ENCODE measurements at regions of chr9 and their contacts with region 1.

Region 1: DNA sequence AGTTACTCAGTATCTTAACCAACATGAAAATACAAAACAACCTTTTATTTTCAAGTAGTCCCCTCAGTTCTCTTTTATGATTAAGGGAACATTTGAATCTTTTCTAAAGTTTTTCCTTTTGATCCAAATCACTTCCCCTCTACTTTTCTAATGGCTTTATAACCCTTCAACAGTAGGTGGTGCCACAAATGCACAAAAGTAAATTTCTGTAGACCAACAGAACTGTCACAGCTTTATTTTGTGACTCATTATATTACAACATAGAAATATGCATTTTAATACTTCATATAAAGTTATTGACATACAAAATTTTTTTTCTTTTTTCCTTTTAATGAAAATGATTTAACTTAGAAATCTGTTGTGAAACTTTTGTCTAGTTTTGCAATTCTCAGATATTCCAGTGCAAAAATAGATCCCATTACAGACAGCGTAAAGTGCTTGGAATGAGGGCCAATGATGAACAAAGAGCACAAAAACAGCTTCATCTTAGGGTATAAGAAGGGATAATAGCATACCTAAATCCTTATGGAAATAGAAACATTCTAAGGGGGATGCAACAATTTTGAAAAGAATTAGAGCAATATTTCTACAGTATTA is 17.0 kb downstream of the NIPSNAP3B start:
- DNase-seq: no peak
- ATAC-seq: peak; percentile 62
- H3K4me3 ChIP-seq: no peak overlapping the region
- H3K27ac ChIP-seq: no peak overlapping the region
- H3K4me1 ChIP-seq: peaks cover 13% of the 10 kb centered on the region
- H3K27me3 ChIP-seq: no peaks in the 10 kb centered on the region
- CTCF ChIP-seq: peak; percentile 34 to 63 (median 50); a peak in 5 of 6 replicates
- EP300 ChIP-seq: no peak
- POLR2A ChIP-seq: no peak
- RAD21 ChIP-seq: peak; percentile 86

Region 2: GRCh38 chr9:104765138-104765537 is 15.8 kb before region 1 on chr9:
- CTCF ChIA-PET with region 1: interaction called, 15 read pairs
- POLR2A ChIA-PET with region 1: interaction called, 16 read pairs
- RAD21 ChIA-PET with region 1: interaction called, 28 read pairs
- SMC1A ChIA-PET with region 1: interaction called, 10 read pairs
- in situ Hi-C with region 1: no loop called
- intact Hi-C with region 1: no loop called
- DNase-seq: no peak
- ATAC-seq: peak; percentile 63
- H3K4me3 ChIP-seq: peak overlapping the region; percentile 82
- H3K27ac ChIP-seq: no peak overlapping the region
- H3K4me1 ChIP-seq: peaks cover 12% of the 10 kb centered on the region
- H3K27me3 ChIP-seq: no peaks in the 10 kb centered on the region
- CTCF ChIP-seq: no peak
- EP300 ChIP-seq: no peak
- POLR2A ChIP-seq: no peak
- RAD21 ChIP-seq: no peak

Measured in GM12878 (cell line).